ENCODE measurements at regions of chr9 and their contacts with region 1.

Region 1: DNA sequence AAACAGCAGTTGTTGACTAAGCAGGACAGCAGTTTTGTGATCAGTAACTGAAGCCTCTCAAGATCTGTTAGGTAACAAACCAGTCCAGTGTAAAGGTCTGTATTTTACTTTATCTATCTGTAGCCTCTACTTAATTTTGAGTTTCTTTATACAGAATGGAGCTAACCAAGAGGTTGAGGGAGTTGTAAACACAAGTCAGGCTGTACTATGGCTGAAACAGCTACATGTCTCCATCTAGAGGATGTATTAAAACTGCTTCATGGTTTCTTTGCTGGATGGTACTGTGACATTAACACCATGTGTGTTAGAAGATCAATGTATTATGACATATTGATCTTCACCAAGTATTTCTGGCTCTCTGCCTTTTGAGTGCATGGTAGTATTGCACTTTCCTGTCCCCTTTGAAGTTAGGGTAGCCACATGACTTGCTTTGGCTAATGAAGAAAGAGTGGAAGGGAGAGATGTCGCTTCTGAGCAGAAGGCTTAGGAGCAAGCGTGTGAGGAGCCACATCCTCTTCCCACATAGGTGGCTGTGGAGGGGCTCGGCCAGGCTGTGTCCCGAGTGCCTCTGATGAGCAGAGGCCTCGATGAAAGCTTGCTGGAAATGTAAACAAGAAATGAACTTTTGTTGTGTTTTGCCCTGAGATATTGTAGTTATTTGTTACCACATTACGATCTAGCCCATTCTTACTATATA is 105.6 kb upstream of the PCA3 start:
- DNase-seq: no peak
- ATAC-seq: peak; percentile 63

Region 2: DNA sequence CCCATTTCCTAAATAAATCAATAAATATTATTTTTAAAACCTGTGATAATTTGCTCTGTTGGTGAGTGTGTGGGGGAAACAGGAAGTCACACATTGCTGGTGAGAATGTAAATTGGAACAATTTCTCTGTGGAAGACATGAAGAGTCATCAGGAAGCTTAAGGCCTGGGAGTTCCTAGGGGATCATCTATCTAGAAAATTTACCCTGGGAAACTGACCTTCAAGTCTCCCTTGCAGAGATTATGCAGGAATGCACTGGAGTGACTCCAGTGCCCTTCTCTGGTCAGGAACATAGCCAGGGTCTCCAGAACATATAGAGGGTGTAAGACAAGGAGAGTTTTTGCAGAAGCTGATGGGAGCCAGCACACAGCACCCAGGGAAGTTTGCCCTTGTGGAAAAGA is 212.7 kb before region 1 on chr9:
- intact Hi-C with region 1: loop called (anchors 1 kb)
- DNase-seq: no peak
- ATAC-seq: no peak

Region 3: DNA sequence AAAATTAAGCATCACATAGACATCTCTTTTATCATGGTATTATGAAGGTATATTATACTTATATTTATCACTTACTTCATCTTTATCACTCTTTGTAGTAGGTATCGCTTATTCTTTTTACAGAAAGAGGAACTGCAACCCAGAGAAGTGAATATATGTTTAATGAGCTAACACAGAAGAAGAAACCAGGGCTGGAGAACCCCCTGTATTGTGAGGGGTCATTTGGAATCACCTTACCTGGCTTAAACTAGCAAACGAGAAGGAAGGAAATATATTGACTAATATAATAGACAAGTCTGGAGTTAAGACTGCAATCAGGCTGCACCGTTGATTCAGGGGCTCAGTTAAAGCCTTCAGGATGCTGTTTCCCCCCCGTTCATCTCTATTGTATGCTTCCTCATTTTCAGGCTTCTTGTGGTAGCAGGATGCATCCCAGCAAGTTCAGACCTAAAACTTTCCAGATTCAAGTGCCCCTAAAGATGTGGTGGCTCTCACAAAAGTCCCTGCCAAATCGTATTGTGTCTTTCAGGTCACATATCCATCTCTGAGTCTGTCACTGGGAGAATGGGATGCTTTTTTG is 53.3 kb before region 1 on chr9:
- intact Hi-C with region 1: loop called (anchors 10 kb)
- DNase-seq: no peak
- ATAC-seq: no peak

Region 4: DNA sequence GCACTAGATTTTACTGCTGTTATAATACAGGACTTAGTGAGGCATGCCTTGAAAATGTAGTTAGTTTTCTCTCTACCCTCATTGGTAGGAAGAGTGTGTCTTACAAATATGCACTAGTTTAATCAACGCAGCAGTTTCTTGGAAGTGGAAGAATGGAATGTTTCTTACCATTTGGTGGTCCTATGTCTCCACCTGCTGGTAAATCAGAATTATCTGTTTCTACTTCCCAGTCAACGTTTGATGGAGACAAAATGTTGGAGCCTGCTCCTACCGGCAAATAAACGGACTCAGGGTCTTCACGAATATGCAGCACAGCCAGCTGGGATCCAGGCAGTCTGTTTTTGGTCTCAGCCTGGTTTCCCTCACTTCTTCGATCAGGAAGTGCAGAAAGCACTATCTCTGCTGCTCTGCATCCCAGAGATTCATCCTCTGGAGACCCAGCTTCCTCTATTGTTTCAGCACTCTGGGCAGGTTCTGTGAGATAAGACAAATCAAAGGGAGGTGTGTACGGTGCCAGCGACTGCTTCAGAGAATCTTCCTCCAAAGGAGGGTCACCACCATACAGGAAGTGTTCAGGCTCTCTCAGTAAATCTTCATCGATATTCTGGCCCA is 46.0 kb after region 1 on chr9:
- intact Hi-C with region 1: loop called (anchors 5 kb)
- DNase-seq: no peak
- ATAC-seq: peak; percentile 26

Measured in Right ventricle myocardium inferior (tissue), 1 donor.